ENCODE measurements at regions of chr18 and their contacts with region 1.

Region 1: GRCh38 chr18:47883771-47884413 is 46.6 kb downstream of the SMAD2 start:
- DNase-seq: no peak
- ATAC-seq: no peak
- H3K4me3 ChIP-seq: no peak overlapping the region
- H3K4me3 Mint-ChIP-seq: no peak overlapping the region
- H3K27ac ChIP-seq: no peak overlapping the region
- H3K27ac Mint-ChIP-seq: peak overlapping the region in 6 of 9 donors; percentile 0 to 83 (median 19)
- H3K4me1 ChIP-seq: peaks cover 0 to 6% of the 10 kb centered on the region in 2 donors
- H3K4me1 Mint-ChIP-seq: peaks cover 29 to 68% (median 63%) of the 10 kb centered on the region in 7 donors
- H3K27me3 ChIP-seq: no peaks in the 10 kb centered on the region
- H3K27me3 Mint-ChIP-seq: no peaks in the 10 kb centered on the region

Region 2: GRCh38 chr18:46859855-46860254 is 1024.0 kb before region 1 on chr18:
- CTCF ChIA-PET with region 1: no interaction called
- POLR2A ChIA-PET with region 1: no interaction called
- intact Hi-C with region 1: no loop called
- DNase-seq: no peak
- ATAC-seq: no peak
- H3K4me3 ChIP-seq: no peak overlapping the region
- H3K4me3 Mint-ChIP-seq: no peak overlapping the region
- H3K27ac ChIP-seq: no peak overlapping the region
- H3K27ac Mint-ChIP-seq: no peak overlapping the region
- H3K4me1 ChIP-seq: no peaks in the 10 kb centered on the region
- H3K4me1 Mint-ChIP-seq: peaks cover 11 to 41% (median 24%) of the 10 kb centered on the region in 7 donors
- H3K27me3 ChIP-seq: no peaks in the 10 kb centered on the region
- H3K27me3 Mint-ChIP-seq: no peaks in the 10 kb centered on the region

Region 3: GRCh38 chr18:47893939-47894699 is 10.2 kb after region 1 on chr18:
- CTCF ChIA-PET with region 1: interaction called, 4 read pairs
- POLR2A ChIA-PET with region 1: no interaction called
- intact Hi-C with region 1: loop called in 1 of 2 experiments (anchors 1 kb)
- DNase-seq: no peak
- ATAC-seq: no peak
- H3K4me3 ChIP-seq: no peak overlapping the region
- H3K4me3 Mint-ChIP-seq: no peak overlapping the region
- H3K27ac ChIP-seq: no peak overlapping the region
- H3K27ac Mint-ChIP-seq: peak overlapping the region in 3 of 9 donors; percentile 12 to 39 (median 34)
- H3K4me1 ChIP-seq: peaks cover 0 to 2% of the 10 kb centered on the region in 2 donors
- H3K4me1 Mint-ChIP-seq: peaks cover 31 to 66% (median 57%) of the 10 kb centered on the region in 7 donors
- H3K27me3 ChIP-seq: no peaks in the 10 kb centered on the region
- H3K27me3 Mint-ChIP-seq: no peaks in the 10 kb centered on the region

Region 4: DNA sequence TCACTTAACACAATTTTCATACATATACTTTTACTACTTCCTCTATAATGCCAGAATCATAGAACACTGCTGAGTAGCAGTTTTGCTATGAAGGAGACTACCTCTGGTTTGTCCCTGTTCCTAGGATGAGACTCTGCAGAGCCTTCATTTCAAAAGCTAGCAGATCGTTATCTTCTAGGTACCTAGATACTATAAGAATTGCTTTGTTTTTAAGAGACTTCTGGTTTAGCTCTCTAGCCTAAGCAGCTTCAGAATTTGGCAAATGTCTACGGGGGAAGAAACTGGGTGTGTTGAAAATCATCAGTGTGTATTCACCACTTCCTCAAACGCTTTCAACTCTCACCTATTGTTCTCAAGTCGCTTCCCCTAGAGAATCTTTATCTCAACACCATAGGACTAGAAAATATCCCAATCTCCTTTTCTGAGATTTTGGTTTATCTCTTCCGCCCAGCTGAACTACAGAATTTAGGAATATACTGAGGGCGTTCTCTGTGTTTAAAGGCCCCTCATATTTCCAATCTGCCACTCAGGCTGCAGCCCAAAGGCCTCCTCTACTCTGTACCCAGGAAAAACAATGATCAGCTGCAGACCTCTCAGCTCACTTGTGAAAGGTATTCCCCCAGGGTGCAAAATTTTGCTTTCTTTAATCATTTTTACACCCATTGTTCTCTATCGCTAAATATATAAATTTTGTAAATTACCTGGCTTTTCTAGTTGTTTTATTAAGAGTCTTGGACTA is 17.9 kb after region 1 on chr18:
- CTCF ChIA-PET with region 1: interaction called, 4 read pairs
- POLR2A ChIA-PET with region 1: interaction called, 5 read pairs
- intact Hi-C with region 1: loop called (anchors 1 to 2 kb)
- DNase-seq: peak in 7 of 9 donors; percentile 57 to 80 (median 71)
- ATAC-seq: peak; percentile 95
- H3K4me3 ChIP-seq: peak overlapping the region; percentile 35
- H3K4me3 Mint-ChIP-seq: peak overlapping the region; percentile 58 to 78 (median 71)
- H3K27ac ChIP-seq: peak overlapping the region; percentile 54
- H3K27ac Mint-ChIP-seq: peak overlapping the region; percentile 80 to 92 (median 88)
- H3K4me1 ChIP-seq: peaks cover 19 to 36% of the 10 kb centered on the region in 2 donors
- H3K4me1 Mint-ChIP-seq: peaks cover 51 to 94% (median 87%) of the 10 kb centered on the region in 7 donors
- H3K27me3 ChIP-seq: no peaks in the 10 kb centered on the region
- H3K27me3 Mint-ChIP-seq: no peaks in the 10 kb centered on the region

Region 5: DNA sequence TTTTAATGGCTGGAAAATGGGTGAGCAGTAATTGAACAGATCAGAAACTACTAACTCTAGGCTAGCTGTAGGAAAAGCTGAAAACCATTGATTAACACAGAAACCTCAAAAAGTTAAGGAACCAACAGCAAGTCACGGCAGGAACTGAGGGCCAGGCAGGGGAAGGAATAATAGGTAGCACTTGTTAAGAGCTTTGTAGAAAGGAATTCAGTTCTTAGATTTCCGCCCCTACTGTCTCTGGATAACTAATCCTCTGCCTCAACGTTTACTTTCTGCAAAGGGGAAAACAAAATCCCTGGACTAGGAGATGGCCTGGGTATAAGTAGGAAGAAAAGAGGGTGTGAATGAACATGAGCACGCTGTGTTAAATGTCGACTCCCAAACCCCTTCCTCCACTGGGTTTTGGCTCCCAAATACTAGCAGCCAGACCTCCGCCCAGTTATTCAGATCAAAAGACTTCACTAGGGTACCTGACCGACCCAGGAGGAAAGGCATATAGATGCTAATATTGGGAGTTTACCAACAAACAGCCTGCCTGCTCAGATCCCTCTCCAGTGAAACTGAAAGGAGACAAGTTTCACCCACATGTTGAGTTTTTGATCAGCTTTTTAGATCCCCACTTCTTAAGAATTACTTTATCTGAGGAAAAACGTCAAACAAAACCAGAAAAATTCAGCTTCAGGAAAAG is 34.2 kb after region 1 on chr18:
- CTCF ChIA-PET with region 1: no interaction called
- POLR2A ChIA-PET with region 1: no interaction called
- intact Hi-C with region 1: loop called in 1 of 2 experiments (anchors 5 kb)
- DNase-seq: no peak
- ATAC-seq: peak; percentile 51
- H3K4me3 ChIP-seq: no peak overlapping the region
- H3K4me3 Mint-ChIP-seq: peak overlapping the region in 9 of 10 donors; percentile 3 to 72 (median 37)
- H3K27ac ChIP-seq: peak overlapping the region; percentile 47
- H3K27ac Mint-ChIP-seq: peak overlapping the region; percentile 67 to 91 (median 82)
- H3K4me1 ChIP-seq: peaks cover 10 to 29% of the 10 kb centered on the region in 2 donors
- H3K4me1 Mint-ChIP-seq: peaks cover 43 to 99% (median 92%) of the 10 kb centered on the region in 7 donors
- H3K27me3 ChIP-seq: no peaks in the 10 kb centered on the region
- H3K27me3 Mint-ChIP-seq: no peaks in the 10 kb centered on the region